Spleen (tissue), 13 donors: ENCODE measurements at regions of chr3 and their contacts with region 1.

Region 1: GRCh38 chr3:67790043-67790442 is 135.6 kb upstream of the SUCLG2 start:
- DNase-seq: no peak
- H3K4me3 ChIP-seq: no peak overlapping the region
- H3K27ac ChIP-seq: no peak overlapping the region
- H3K4me1 ChIP-seq: no peaks in the 10 kb centered on the region
- H3K27me3 ChIP-seq: no peaks in the 10 kb centered on the region
- CTCF ChIP-seq: peak; percentile 40 to 85 (median 67)
- POLR2A ChIP-seq: no peak

Region 2: GRCh38 chr3:66778777-66779176 is 1011.3 kb before region 1 on chr3:
- intact Hi-C with region 1: no loop called
- DNase-seq: no peak
- H3K4me3 ChIP-seq: no peak overlapping the region
- H3K27ac ChIP-seq: no peak overlapping the region
- H3K4me1 ChIP-seq: no peaks in the 10 kb centered on the region
- H3K27me3 ChIP-seq: peaks cover 0 to 10% (median 0%) of the 10 kb centered on the region in 7 donors
- CTCF ChIP-seq: no peak
- POLR2A ChIP-seq: no peak

Region 3: DNA sequence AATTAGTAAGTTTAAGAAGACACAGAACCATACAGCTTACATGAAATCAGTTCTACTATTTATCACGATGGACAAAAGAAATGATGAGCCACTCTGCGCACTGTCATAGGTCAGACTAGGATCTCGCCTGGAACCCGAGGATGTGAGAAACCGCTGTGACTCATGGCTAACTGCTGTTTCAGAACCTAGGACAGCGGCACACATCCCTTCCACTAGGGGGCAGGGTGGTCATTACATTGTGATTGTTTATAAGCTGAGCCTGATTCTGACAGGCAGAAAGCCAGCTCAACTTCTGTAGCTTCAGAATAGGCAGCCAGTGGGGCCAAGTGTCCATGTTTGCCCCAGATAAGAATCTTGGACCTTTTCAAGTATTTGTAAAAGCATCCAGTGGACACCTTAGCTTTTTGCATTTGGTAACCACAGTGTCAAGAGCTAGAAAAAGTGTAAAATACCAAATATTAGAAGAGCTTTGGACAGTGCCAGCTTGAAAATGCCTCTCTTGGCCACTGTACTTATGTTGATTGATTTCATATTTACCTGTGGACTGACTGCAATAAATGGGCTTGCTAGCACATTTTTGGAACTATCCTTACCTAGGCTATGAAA is 676.1 kb before region 1 on chr3:
- intact Hi-C with region 1: loop called (anchors 5 kb)
- DNase-seq: peak; percentile 81
- H3K4me3 ChIP-seq: no peak overlapping the region
- H3K27ac ChIP-seq: no peak overlapping the region
- H3K4me1 ChIP-seq: no peaks in the 10 kb centered on the region
- H3K27me3 ChIP-seq: peaks cover 0 to 10% (median 0%) of the 10 kb centered on the region in 7 donors
- CTCF ChIP-seq: peak; percentile 54 to 90 (median 77)
- POLR2A ChIP-seq: no peak

Region 4: GRCh38 chr3:67176396-67176795 is 613.6 kb before region 1 on chr3:
- intact Hi-C with region 1: no loop called
- DNase-seq: no peak
- H3K4me3 ChIP-seq: no peak overlapping the region
- H3K27ac ChIP-seq: no peak overlapping the region
- H3K4me1 ChIP-seq: no peaks in the 10 kb centered on the region
- H3K27me3 ChIP-seq: no peaks in the 10 kb centered on the region
- CTCF ChIP-seq: no peak
- POLR2A ChIP-seq: no peak

Region 5: DNA sequence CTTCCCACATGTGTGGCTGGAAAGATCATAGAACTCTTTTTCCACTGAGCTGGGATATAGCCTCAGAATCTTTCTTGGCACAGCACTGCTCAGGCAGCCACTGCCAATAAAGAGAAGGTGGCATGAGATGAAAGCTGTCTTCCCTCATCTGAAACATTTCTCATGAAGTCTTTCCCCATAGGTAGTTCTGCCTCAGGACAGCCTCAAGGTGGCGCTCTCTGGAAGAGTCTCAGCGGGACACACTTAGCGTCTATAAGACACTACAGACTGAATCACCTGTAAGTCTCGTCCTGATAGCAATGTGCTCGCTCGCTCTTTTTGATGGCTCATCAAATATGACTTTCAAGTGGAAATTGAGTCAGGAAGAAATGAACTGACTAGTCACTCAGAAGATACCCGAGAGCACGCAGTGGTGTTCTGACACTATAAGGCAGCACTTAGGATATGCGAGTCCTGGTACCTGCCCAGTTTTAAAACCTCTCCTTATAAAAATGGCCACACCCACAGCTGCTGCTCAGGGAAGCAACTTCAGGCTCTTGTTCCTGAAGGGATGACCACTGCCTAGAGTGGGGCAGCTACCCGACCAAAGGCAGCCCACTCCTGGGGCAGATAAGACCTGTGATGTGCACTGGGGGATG is 405.2 kb before region 1 on chr3:
- intact Hi-C with region 1: loop called (anchors 5 kb)
- DNase-seq: peak; percentile 79
- H3K4me3 ChIP-seq: no peak overlapping the region
- H3K27ac ChIP-seq: no peak overlapping the region
- H3K4me1 ChIP-seq: peaks cover 0 to 32% (median 8%) of the 10 kb centered on the region in 6 donors
- H3K27me3 ChIP-seq: no peaks in the 10 kb centered on the region
- CTCF ChIP-seq: peak in 8 of 11 experiments; percentile 18 to 59 (median 44)
- POLR2A ChIP-seq: no peak

Region 6: DNA sequence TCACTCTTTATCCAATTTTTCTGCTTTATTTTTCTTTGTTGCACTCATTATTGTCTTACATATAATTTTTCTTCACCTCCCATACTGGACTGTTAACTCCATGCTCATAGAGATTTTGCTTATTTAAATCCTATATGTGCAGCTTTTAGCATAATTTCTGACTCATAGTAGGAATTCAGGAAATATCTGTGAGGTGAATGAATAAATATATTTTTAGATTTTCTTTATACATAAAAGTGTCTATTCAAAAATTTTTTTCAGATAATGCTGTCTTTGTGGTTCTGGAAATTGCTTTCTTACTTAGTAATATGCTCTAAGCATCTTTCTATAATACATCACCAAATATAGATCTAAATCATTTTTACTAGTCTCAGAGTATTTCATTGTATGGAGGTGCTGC is 56.1 kb after region 1 on chr3:
- intact Hi-C with region 1: no loop called
- DNase-seq: no peak
- H3K4me3 ChIP-seq: no peak overlapping the region
- H3K27ac ChIP-seq: no peak overlapping the region
- H3K4me1 ChIP-seq: no peaks in the 10 kb centered on the region
- H3K27me3 ChIP-seq: no peaks in the 10 kb centered on the region
- CTCF ChIP-seq: no peak
- POLR2A ChIP-seq: no peak